ENCODE measurements at regions of chr19 and their contacts with region 1.

Region 1: DNA sequence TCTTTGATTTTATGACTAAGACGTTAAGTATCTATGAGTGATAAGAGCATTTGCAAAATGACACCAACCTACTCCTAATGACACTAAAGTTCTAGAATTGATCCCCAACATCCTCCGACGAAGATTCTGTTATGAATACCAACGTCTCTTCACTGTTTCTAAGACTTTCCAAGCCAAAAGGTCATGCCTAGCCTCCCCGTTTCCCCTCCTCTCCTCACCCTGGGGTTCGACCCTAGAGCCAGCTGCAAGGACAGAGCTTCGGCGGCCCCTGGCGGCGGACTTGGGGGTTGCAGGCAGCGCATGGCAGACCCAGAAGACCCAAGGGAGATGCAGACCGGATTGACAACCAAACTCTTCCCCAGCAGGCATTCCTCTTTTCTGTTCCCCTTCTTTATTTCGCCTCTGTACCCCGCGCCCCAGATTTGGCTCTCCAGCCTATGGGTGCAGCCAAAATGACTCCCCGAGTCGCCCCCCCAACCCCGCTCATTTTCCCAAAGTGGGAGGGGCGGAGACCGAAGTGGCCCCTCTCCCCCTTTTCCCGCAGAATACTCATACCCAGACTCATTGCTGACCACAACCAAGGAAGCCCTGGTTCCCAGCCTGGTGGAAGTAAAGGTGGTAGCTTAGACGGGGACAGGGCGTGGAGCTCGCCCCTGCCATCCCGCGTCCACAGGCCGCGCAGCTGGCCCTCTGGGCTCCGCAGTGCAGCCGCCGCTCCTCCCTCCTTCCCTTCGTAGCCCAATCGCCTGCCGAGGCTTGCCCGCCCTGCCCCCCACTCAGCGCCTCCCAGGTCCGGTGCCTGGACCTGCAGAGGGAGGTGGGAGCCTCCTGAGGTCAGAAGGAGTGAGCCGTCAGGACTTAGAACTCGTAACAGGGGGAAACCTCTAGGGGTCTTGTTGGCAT is 4.1 kb upstream of the EML2 start:
- DNase-seq: peak; percentile 92
- ATAC-seq: peak; percentile 41
- H3K4me3 Mint-ChIP-seq: peak overlapping the region; percentile 80
- H3K27ac Mint-ChIP-seq: peak overlapping the region; percentile 97
- H3K4me1 Mint-ChIP-seq: peaks cover 50% of the 10 kb centered on the region
- H3K27me3 Mint-ChIP-seq: no peaks in the 10 kb centered on the region
- CTCF ChIP-seq: no peak

Region 2: DNA sequence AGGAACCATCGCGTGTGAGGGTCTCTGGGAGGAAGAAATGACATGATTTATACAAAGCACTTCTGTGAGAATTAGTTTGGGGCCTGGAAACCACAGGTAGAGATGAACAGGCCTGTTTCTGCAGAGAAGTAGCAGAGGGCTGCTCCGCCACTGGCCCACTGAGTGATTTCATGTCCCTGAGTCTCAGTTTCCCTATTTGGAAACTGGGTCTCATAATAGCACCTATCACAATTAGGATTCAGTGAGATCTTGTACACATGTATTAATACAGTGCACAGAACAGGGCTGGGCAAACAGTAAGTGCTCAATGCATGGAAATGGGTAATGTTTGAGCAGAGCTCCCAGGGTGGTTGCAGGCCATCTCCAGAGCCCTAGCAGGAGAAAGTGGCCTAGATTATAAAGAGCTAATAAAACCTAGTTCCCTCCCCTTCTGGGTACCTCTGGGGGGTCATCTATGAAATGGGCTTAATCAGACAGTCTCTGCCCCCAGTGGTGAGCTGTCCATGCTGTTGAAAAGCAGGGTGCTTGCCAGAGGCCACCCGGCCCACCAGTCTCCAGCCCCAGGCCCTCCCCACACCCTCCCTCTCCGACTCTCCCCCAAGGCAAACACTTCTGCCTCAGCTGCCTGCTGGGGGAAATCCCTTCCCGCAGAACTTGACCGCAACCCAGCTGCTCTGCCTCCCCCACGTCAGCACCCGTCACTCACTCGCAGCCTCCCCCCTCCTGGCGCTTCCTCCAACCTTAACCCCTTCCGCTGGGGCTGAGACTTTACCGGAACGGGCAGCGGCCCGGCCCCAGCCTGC is 890.3 kb before region 1 on chr19:
- CTCF ChIA-PET with region 1: no interaction called
- POLR2A ChIA-PET with region 1: no interaction called
- intact Hi-C with region 1: loop called (anchors 10 kb)
- DNase-seq: peak; percentile 87
- ATAC-seq: peak; percentile 76
- H3K4me3 Mint-ChIP-seq: peak overlapping the region; percentile 95
- H3K27ac Mint-ChIP-seq: peak overlapping the region; percentile 96
- H3K4me1 Mint-ChIP-seq: peaks cover 68% of the 10 kb centered on the region
- H3K27me3 Mint-ChIP-seq: no peaks in the 10 kb centered on the region
- CTCF ChIP-seq: no peak

Region 3: GRCh38 chr19:45306518-45307027 is 336.7 kb before region 1 on chr19:
- CTCF ChIA-PET with region 1: no interaction called
- POLR2A ChIA-PET with region 1: no interaction called
- intact Hi-C with region 1: no loop called
- DNase-seq: no peak
- ATAC-seq: no peak
- H3K4me3 Mint-ChIP-seq: no peak overlapping the region
- H3K27ac Mint-ChIP-seq: no peak overlapping the region
- H3K4me1 Mint-ChIP-seq: no peaks in the 10 kb centered on the region
- H3K27me3 Mint-ChIP-seq: no peaks in the 10 kb centered on the region
- CTCF ChIP-seq: no peak

Region 4: GRCh38 chr19:45370410-45371204 is 272.7 kb before region 1 on chr19 and contains the start of gene ERCC2:
- CTCF ChIA-PET with region 1: no interaction called
- POLR2A ChIA-PET with region 1: no interaction called
- intact Hi-C with region 1: no loop called
- DNase-seq: peak; percentile 98
- ATAC-seq: peak; percentile 97
- H3K4me3 Mint-ChIP-seq: peak within 1 kb of the TSS; percentile 95
- H3K27ac Mint-ChIP-seq: peak within 1 kb of the TSS; percentile 99
- H3K4me1 Mint-ChIP-seq: peaks cover 14% of the 10 kb centered on the region
- H3K27me3 Mint-ChIP-seq: no peaks in the 10 kb centered on the region
- CTCF ChIP-seq: no peak
- total RNA-seq, gene ERCC2: 29.8 and 31.5 TPM in 2 replicates

Region 5: GRCh38 chr19:45469132-45469944 is 173.9 kb before region 1 on chr19:
- CTCF ChIA-PET with region 1: no interaction called
- POLR2A ChIA-PET with region 1: interaction called, 24 read pairs
- intact Hi-C with region 1: no loop called
- DNase-seq: peak; percentile 92
- ATAC-seq: peak; percentile 52
- H3K4me3 Mint-ChIP-seq: peak overlapping the region; percentile 92
- H3K27ac Mint-ChIP-seq: peak overlapping the region; percentile 98
- H3K4me1 Mint-ChIP-seq: peaks cover 57% of the 10 kb centered on the region
- H3K27me3 Mint-ChIP-seq: peaks cover 16% of the 10 kb centered on the region
- CTCF ChIP-seq: no peak

Region 6: DNA sequence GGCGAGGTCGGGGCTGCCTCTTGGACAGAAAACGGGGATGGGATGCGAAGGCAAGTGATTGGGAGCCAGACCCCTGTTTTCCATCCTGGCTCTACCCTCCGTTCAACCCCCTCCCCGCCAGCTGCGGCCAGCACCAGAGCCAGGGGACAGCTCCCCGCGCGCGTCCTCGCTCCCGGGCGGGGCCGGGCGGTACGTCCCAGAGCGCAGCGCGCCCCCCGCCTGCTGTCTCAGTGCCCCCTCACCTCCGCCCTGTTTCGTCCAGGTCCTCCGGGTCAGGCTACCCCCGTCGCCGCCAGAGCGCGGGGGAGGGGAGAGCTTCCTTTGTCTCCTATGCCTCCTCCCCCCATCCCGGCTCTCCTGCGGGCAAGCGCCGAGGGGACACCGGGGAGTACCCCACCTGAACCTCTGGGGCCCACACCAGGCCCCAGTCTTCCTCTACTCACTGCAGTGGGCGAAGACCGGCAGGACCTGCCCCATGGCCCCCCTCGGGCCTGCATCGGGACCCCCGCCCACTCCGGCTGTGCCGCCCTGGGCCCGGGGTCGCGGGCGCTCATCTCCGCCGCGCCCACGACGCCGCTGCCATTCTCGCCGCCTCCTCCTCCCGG is 146.8 kb before region 1 on chr19:
- CTCF ChIA-PET with region 1: interaction called, 8 read pairs
- POLR2A ChIA-PET with region 1: interaction called, 6 read pairs
- intact Hi-C with region 1: loop called (anchors 1 kb)
- DNase-seq: peak; percentile 53
- ATAC-seq: peak; percentile 10
- H3K4me3 Mint-ChIP-seq: peak overlapping the region; percentile 85
- H3K27ac Mint-ChIP-seq: no peak overlapping the region
- H3K4me1 Mint-ChIP-seq: peaks cover 45% of the 10 kb centered on the region
- H3K27me3 Mint-ChIP-seq: peaks cover 12% of the 10 kb centered on the region
- CTCF ChIP-seq: no peak

Region 7: DNA sequence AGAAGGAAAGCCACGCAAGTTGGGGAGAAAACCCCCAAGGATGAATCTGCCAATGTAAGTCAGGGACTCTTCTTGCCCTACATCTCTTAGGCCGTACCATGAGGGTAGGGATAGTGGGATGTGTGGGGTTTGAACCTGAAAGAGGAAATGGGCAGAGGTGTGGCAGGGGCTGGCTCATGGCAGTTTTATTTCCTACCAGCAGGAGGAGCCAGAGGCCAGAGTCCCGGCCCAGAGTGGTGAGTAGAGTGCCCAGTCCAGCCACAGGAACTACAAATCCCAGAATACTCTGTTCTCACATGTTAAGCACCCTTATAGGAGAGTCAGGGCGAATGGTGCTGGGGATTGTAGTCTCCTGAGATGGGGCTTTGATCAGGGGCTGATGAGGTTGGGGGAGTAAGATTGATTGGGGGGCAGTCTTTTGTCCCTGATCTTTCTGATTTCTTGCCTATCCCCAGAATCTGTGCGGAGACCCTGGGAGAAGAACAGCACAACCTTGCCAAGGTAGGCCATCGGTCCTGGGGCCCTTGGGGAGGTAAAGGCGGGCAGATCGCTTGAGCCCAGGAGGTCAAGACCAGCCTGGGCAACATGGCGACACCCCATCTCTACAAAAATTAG is 119.5 kb before region 1 on chr19:
- CTCF ChIA-PET with region 1: interaction called, 4 read pairs
- POLR2A ChIA-PET with region 1: interaction called, 6 read pairs
- intact Hi-C with region 1: loop called (anchors 1 kb)
- DNase-seq: peak; percentile 62
- ATAC-seq: peak; percentile 98
- H3K4me3 Mint-ChIP-seq: no peak overlapping the region
- H3K27ac Mint-ChIP-seq: peak overlapping the region; percentile 71
- H3K4me1 Mint-ChIP-seq: peaks cover 25% of the 10 kb centered on the region
- H3K27me3 Mint-ChIP-seq: no peaks in the 10 kb centered on the region
- CTCF ChIP-seq: peak; percentile 58

Region 8: GRCh38 chr19:45615795-45616708 is 27.2 kb before region 1 on chr19:
- CTCF ChIA-PET with region 1: interaction called, 5 read pairs
- POLR2A ChIA-PET with region 1: interaction called, 12 read pairs
- intact Hi-C with region 1: no loop called
- DNase-seq: peak; percentile 53
- ATAC-seq: peak; percentile 97
- H3K4me3 Mint-ChIP-seq: no peak overlapping the region
- H3K27ac Mint-ChIP-seq: no peak overlapping the region
- H3K4me1 Mint-ChIP-seq: peaks cover 11% of the 10 kb centered on the region
- H3K27me3 Mint-ChIP-seq: no peaks in the 10 kb centered on the region
- CTCF ChIP-seq: no peak

Region 9: DNA sequence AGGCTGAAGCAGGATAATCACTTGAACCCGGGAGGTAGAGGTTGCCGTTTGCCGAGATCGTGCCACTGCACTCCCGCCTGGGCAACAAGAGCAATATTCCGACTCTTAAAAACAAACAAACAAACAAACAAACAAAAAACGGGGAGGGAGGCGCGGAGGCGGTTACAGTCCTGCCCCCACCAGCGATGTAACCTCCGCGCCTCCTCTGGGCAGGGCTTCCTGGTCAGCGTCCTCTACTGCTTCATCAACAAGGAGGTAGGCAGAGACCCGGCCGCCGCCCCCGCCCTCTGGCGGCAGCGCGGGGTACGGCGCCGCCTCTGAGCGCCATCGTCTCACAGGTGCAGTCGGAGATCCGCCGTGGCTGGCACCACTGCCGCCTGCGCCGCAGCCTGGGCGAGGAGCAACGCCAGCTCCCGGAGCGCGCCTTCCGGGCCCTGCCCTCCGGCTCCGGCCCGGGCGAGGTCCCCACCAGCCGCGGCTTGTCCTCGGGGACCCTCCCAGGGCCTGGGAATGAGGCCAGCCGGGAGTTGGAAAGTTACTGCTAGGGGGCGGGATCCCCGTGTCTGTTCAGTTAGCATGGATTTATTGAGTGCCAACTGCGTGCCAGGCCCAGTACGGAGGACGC is 38.2 kb after region 1 on chr19:
- CTCF ChIA-PET with region 1: interaction called, 6 read pairs
- POLR2A ChIA-PET with region 1: interaction called, 5 read pairs
- intact Hi-C with region 1: loop called (anchors 1 kb)
- DNase-seq: peak; percentile 92
- ATAC-seq: peak; percentile 92
- H3K4me3 Mint-ChIP-seq: peak overlapping the region; percentile 77
- H3K27ac Mint-ChIP-seq: no peak overlapping the region
- H3K4me1 Mint-ChIP-seq: peaks cover 17% of the 10 kb centered on the region
- H3K27me3 Mint-ChIP-seq: peaks cover 7% of the 10 kb centered on the region
- CTCF ChIP-seq: peak; percentile 69

Measured in activated B cell treated with CpG ODN at 0.5 μM for 24 hours (primary cell).